ENCODE measurements at regions of chr1 and their contacts with region 1.

Region 1: GRCh38 chr1:149962123-149962548 is 25.5 kb upstream of the MTMR11 start:
- DNase-seq: peak in 4 of 5 donors; percentile 57 to 63 (median 59)
- H3K4me3 ChIP-seq: no peak overlapping the region
- H3K4me3 Mint-ChIP-seq: peak overlapping the region in 1 of 8 donors; percentile 20
- H3K27ac ChIP-seq: no peak overlapping the region
- H3K27ac Mint-ChIP-seq: peak overlapping the region in 3 of 7 donors; percentile 22 to 65 (median 64)
- H3K4me1 ChIP-seq: peaks cover 16% of the 10 kb centered on the region
- H3K4me1 Mint-ChIP-seq: peaks cover 10 to 23% (median 16%) of the 10 kb centered on the region in 4 donors
- H3K27me3 ChIP-seq: no peaks in the 10 kb centered on the region
- H3K27me3 Mint-ChIP-seq: no peaks in the 10 kb centered on the region

Region 2: DNA sequence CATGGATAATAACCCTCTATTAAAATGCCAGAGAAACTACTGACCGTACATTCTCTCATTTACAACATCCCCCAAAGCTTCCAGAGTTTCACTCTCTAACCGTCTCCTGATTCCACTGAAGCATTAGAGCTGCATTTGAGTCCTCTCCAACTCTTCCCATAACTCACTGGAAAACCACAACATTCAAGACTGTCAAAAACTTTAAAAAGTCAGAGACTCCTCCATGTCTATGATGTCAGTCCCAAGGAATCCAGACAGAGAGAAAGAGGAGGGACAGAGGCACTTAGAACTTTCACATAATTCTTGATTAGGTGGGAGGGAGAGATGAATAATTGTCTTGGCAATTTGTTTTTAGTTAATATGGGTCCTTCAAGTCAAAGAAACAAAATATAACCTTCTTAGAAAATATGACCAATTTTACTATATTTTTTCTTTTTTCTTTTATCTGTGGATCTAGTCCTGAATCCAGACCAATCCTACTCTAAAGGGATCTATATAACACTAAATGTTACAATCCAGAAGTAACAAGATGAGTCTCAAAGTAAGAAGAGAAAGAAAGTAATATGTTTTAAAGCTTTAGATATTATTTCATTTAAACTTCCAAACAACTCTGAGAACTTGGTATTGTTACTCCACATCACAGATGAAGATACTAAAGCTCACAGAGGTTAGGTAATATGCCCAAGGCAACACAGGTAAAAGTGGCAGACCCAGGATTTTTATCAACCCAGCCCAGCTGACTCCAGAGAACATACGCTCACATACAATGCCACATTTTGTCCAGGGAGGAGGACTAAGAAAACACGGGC is 24.6 kb after region 1 on chr1:
- CTCF ChIA-PET with region 1: interaction called, 10 read pairs
- POLR2A ChIA-PET with region 1: no interaction called
- intact Hi-C with region 1: no loop called
- DNase-seq: no peak
- H3K4me3 ChIP-seq: no peak overlapping the region
- H3K4me3 Mint-ChIP-seq: no peak overlapping the region
- H3K27ac ChIP-seq: no peak overlapping the region
- H3K27ac Mint-ChIP-seq: peak overlapping the region in 2 of 7 donors; percentile 13 to 72
- H3K4me1 ChIP-seq: no peaks in the 10 kb centered on the region
- H3K4me1 Mint-ChIP-seq: peaks cover 0 to 15% (median 8%) of the 10 kb centered on the region in 4 donors
- H3K27me3 ChIP-seq: no peaks in the 10 kb centered on the region
- H3K27me3 Mint-ChIP-seq: no peaks in the 10 kb centered on the region

Region 3: DNA sequence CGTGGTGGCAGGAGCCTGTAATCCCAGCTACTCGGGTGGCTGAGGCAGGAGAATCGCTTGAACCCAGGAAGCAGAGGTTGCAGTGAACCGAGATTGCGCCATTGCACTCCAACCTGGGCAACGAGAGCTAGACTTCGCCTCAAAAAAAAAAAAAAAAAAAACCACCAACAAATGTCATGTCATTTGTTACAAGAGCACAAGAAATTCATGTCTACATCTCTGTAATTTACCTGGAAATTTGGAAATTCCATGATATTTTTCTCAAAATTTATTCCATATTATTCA is 88.9 kb after region 1 on chr1:
- CTCF ChIA-PET with region 1: interaction called, 10 read pairs
- POLR2A ChIA-PET with region 1: interaction called, 8 read pairs
- intact Hi-C with region 1: loop called (anchors 1 kb)
- DNase-seq: no peak
- H3K4me3 ChIP-seq: no peak overlapping the region
- H3K4me3 Mint-ChIP-seq: no peak overlapping the region
- H3K27ac ChIP-seq: no peak overlapping the region
- H3K27ac Mint-ChIP-seq: no peak overlapping the region
- H3K4me1 ChIP-seq: no peaks in the 10 kb centered on the region
- H3K4me1 Mint-ChIP-seq: peaks cover 0 to 3% (median 1%) of the 10 kb centered on the region in 4 donors
- H3K27me3 ChIP-seq: no peaks in the 10 kb centered on the region
- H3K27me3 Mint-ChIP-seq: peaks cover 0 to 1% of the 10 kb centered on the region in 2 donors

Region 4: GRCh38 chr1:150072959-150073358 is 110.8 kb after region 1 on chr1:
- CTCF ChIA-PET with region 1: interaction called, 17 read pairs
- POLR2A ChIA-PET with region 1: no interaction called
- intact Hi-C with region 1: no loop called
- DNase-seq: peak in 4 of 5 donors; percentile 45 to 59 (median 50)
- H3K4me3 ChIP-seq: no peak overlapping the region
- H3K4me3 Mint-ChIP-seq: no peak overlapping the region
- H3K27ac ChIP-seq: no peak overlapping the region
- H3K27ac Mint-ChIP-seq: peak overlapping the region in 4 of 7 donors; percentile 1 to 76 (median 66)
- H3K4me1 ChIP-seq: peaks cover 29% of the 10 kb centered on the region
- H3K4me1 Mint-ChIP-seq: peaks cover 35 to 47% (median 40%) of the 10 kb centered on the region in 4 donors
- H3K27me3 ChIP-seq: no peaks in the 10 kb centered on the region
- H3K27me3 Mint-ChIP-seq: no peaks in the 10 kb centered on the region

Region 5: DNA sequence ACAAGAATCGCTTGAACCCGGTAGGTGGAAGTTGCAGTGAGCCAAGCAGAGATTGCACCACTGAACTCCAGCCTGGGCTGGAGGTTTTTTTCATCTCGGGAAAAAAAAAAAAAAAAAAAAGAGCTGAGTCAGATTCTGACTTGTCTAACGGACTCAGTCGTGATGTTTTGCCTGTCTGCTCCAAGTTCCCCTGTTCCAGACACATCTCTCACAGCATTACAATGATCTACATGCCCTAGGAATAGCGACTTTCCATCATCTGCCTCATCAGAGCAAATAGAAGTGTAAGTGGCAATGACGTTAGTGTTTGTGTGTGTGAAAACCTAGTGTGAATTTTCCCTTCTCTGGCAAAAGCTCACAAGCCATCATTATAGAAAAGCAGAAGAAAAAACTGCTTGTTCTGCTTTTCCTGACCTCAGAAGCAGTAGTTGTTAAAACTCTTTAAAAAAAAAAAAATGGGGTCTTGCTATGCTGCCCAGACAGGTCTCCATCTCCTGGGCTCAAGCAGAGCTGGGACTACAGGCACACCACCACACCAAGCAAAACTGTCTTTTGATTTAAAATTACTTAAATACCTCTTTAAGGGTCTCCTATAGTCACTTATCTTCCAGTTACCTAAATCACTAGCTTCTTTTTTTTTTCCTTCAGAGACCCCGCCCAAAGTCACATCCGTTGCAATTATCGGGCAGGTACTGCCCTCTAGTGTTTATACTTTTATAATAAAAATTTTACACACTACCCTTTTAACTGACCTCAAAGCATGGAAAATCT is 224.8 kb after region 1 on chr1:
- CTCF ChIA-PET with region 1: interaction called, 80 read pairs
- POLR2A ChIA-PET with region 1: interaction called, 4 read pairs
- intact Hi-C with region 1: loop called (anchors 1 kb)
- DNase-seq: peak; percentile 42 to 71 (median 65)
- H3K4me3 ChIP-seq: no peak overlapping the region
- H3K4me3 Mint-ChIP-seq: peak overlapping the region in 7 of 8 donors; percentile 1 to 65 (median 44)
- H3K27ac ChIP-seq: no peak overlapping the region
- H3K27ac Mint-ChIP-seq: peak overlapping the region in 4 of 7 donors; percentile 19 to 85 (median 70)
- H3K4me1 ChIP-seq: peaks cover 8% of the 10 kb centered on the region
- H3K4me1 Mint-ChIP-seq: peaks cover 5 to 13% (median 8%) of the 10 kb centered on the region in 4 donors
- H3K27me3 ChIP-seq: no peaks in the 10 kb centered on the region
- H3K27me3 Mint-ChIP-seq: no peaks in the 10 kb centered on the region

Region 6: DNA sequence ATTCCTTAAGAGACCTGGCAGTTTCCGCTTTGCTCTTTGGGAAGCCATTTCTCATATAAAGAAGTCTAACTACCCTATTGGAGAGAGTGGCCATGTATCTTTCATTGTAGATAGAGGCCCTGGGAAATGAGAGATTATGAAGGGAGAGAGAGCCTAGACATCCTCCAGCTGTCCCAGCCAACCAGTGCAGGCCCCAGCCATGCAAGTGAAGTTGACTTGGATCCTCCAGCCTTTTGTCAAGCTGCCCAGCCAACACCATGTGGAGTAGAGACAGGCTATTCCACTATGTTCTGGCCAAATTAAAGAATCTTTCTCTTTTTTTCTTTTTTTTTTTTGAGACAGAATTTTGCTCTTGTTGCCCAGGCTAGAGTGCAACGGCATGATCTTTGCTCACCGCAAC is 280.9 kb after region 1 on chr1:
- CTCF ChIA-PET with region 1: no interaction called
- POLR2A ChIA-PET with region 1: no interaction called
- intact Hi-C with region 1: no loop called
- DNase-seq: no peak
- H3K4me3 ChIP-seq: no peak overlapping the region
- H3K4me3 Mint-ChIP-seq: no peak overlapping the region
- H3K27ac ChIP-seq: no peak overlapping the region
- H3K27ac Mint-ChIP-seq: no peak overlapping the region
- H3K4me1 ChIP-seq: no peaks in the 10 kb centered on the region
- H3K4me1 Mint-ChIP-seq: no peaks in the 10 kb centered on the region
- H3K27me3 ChIP-seq: no peaks in the 10 kb centered on the region
- H3K27me3 Mint-ChIP-seq: no peaks in the 10 kb centered on the region

Measured in CD4-positive, alpha-beta memory T cell (primary cell).